ENCODE measurements at regions of chr16 and their contacts with region 1.

Region 1: DNA sequence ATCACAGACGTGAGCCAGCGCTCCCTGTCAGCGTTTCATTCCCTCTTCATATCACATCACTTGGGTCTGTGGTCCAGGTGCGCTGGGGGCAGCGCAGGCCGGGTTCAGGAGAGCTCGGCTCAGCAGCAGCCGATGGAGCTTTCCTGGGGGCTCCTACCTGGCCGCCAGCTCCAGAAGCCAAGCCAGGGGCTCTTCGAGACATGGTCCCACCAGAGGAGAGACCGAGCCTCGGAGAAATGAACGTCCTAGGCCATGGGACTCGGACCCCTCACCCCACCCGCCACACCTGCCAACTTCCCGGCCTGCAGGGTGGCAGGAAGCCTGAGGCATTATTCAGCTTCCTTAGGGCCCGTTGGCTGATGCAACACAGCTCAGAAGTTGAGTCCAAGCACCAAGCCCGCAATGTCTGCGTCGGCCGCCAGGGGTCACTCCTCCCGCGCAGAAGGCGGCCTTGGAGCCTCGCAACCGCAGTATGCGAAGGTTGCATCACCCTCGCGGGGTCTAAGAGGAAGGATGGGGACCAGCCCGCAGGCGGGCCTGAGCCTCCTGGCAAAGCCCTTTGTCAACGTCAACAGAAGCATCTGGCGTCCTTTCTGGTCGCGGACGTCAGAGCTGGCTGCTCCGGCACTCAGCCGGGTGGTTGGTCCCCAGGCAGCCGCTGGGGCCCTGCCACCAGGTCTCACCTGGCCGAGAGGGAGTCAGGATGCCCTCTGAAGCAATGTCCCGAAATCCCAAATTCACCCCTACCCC is 13.2 kb upstream of the KLHDC4 start:
- H3K4me3 ChIP-seq: no peak overlapping the region
- H3K27ac ChIP-seq: peak overlapping the region; percentile 79
- H3K4me1 ChIP-seq: no peaks in the 10 kb centered on the region
- CTCF ChIP-seq: peak; percentile 99

Region 2: DNA sequence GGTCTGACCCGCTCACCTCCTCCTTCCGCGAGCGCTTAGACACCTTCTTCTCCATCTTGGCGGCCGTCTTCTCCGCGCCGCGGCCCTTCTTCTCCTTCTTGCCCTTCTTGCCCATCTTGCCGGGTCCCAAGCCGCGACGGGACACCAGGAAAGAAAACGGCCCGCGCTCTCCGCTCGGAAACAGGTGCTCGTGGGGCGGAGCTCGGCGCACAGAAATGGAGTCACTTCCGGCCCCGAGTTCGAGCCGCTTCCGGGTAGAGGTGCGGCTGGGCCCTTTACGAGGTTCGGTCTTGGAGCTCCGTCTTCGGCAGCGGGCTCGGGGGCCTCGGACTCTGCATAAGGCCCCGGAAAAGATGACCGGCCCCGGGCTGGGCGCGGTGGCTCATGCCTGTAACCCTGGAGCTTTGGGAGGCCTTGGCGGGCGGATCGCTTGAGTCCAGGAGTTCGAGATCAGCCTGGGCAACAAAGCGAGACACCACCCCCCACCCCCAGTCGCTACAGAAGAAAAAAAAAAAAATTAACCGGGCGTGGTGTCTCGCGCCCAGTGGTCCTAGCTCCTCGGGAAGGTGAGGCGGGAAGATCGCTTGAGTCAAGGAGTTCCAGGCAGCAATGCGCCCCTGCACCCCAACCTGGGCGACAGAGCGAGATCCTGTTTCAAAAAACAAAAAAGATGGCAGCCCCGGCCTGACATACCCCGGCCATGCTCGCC is 13.1 kb before region 1 on chr16 and contains the start of gene KLHDC4:
- CTCF ChIA-PET with region 1: interaction called, 21 read pairs
- POLR2A ChIA-PET with region 1: interaction called, 5 read pairs
- H3K4me3 ChIP-seq: peak within 1 kb of the TSS; percentile 65
- H3K27ac ChIP-seq: peak within 1 kb of the TSS; percentile 83
- H3K4me1 ChIP-seq: peaks cover 2% of the 10 kb centered on the region; the same call in 1 of the 2 replicates
- CTCF ChIP-seq: no peak; the same call in 1 of the 2 replicates

Region 3: DNA sequence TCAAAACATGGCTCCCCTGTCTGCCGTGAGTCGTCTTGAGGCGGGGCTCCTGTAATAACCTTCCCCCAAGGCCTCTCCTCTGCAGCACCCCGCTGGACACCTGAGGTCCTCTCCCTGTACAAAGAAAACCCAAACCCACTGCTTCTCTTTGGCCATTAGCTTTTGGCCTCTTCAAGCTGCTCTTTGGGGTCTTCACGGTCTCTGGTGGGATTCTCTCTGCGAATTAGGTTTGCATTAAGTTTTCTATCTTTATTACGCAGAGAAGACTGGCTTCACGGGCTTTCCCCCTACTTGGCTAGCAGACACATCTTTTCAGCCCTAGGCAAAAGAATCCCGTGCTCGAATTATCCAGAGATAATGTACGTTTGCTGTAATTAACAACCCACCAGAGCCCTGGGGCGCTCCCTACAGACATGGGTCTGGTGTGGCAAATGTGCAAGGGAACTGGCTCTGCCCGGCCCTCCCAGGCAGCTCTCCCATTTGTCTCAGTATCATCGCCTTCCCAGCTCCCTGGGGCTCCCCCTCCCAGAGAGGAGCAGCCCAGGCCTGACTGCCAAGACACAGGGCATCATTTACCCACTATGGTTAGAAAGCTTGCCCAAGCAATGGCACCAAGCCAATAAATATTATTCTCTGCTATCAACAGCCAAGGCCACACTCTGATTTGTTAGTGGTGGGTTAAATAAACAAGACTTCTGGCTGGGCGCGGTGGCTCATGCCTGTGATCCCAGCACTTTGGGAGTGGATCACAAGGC is 11.4 kb after region 1 on chr16:
- CTCF ChIA-PET with region 1: interaction called, 52 read pairs
- POLR2A ChIA-PET with region 1: interaction called, 3 read pairs
- H3K4me3 ChIP-seq: no peak overlapping the region
- H3K27ac ChIP-seq: no peak overlapping the region
- H3K4me1 ChIP-seq: no peaks in the 10 kb centered on the region
- CTCF ChIP-seq: no peak

Region 4: GRCh38 chr16:87806603-87807546 is 27.9 kb after region 1 on chr16:
- CTCF ChIA-PET with region 1: interaction called, 12 read pairs
- POLR2A ChIA-PET with region 1: interaction called, 8 read pairs
- H3K4me3 ChIP-seq: peak overlapping the region; percentile 12; the same call in 1 of the 2 replicates
- H3K27ac ChIP-seq: peak overlapping the region; percentile 28; the same call in 1 of the 2 replicates
- H3K4me1 ChIP-seq: peaks cover 4% of the 10 kb centered on the region; the same call in 1 of the 2 replicates
- CTCF ChIP-seq: no peak

Region 5: DNA sequence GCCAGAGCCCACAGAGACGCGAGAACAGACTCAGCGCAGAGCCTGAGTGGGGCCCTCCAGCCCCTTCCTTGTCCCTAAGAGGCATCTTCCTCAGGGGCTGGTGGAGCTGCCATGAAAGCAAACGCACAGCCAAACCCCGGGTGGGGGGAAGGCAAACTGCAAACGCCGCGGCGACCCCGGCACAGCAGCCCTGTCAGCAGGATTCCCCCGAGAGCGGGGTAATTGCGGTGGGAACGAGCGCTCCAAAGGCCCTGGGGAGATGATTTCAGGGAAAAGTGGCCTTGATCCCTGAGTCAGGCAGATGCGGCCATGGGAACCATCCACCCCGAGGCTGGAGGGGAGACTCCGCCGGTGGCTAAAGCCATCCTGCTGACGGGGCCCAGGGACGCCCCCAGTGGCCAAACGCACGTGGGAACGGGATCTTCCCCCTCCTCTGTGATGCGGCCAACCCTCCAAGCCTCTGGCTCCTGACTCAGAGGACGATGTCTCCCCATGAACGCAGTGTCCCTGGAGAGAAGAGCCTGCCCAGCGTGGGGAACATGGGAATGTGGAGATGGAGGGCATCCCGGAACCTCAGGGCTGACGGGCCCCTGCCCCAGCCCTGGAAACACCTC is 65.2 kb after region 1 on chr16:
- CTCF ChIA-PET with region 1: interaction called, 45 read pairs
- POLR2A ChIA-PET with region 1: no interaction called
- H3K4me3 ChIP-seq: no peak overlapping the region
- H3K27ac ChIP-seq: no peak overlapping the region
- H3K4me1 ChIP-seq: no peaks in the 10 kb centered on the region
- CTCF ChIP-seq: peak; percentile 23; the same call in 1 of the 2 replicates

Region 6: GRCh38 chr16:87853411-87854052 is 74.5 kb after region 1 on chr16:
- CTCF ChIA-PET with region 1: interaction called, 45 read pairs
- POLR2A ChIA-PET with region 1: interaction called, 9 read pairs
- H3K4me3 ChIP-seq: peak overlapping the region; percentile 9
- H3K27ac ChIP-seq: peak overlapping the region; percentile 84
- H3K4me1 ChIP-seq: peaks cover 8% of the 10 kb centered on the region
- CTCF ChIP-seq: no peak

Region 7: DNA sequence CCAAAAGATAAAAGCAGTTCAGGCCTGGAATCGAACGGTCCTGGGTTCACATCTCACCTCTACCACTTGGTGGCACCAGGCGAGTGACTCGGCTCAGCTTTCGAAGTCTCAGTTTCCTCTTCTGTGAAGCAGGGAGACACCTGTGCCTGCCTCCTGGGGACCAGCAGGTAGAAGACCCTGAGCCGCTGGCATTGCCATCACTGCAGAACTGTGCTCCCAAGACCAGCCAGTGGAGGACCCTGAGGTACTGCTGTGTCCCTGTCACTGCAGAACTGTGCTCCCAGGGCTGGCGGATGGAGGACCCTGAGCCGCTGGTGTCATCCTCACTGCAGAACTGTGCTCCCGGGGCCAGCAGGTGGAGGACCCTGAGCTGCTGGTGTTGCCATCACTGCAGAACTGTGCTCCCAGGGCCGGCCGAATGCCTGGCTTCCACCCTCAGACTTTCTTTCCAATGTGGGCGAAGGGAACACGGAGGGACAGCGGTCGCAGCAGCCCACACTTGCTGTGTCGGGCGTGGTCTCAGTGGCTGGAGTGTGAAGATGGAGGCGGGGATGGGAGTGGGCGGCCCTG is 99.0 kb after region 1 on chr16:
- CTCF ChIA-PET with region 1: interaction called, 173 read pairs
- POLR2A ChIA-PET with region 1: interaction called, 55 read pairs
- H3K4me3 ChIP-seq: no peak overlapping the region
- H3K27ac ChIP-seq: no peak overlapping the region
- H3K4me1 ChIP-seq: no peaks in the 10 kb centered on the region
- CTCF ChIP-seq: no peak

Measured in HEK293 (cell line).